HEK293 (cell line): ENCODE measurements at regions of chr9 and their contacts with region 1.

Region 1: DNA sequence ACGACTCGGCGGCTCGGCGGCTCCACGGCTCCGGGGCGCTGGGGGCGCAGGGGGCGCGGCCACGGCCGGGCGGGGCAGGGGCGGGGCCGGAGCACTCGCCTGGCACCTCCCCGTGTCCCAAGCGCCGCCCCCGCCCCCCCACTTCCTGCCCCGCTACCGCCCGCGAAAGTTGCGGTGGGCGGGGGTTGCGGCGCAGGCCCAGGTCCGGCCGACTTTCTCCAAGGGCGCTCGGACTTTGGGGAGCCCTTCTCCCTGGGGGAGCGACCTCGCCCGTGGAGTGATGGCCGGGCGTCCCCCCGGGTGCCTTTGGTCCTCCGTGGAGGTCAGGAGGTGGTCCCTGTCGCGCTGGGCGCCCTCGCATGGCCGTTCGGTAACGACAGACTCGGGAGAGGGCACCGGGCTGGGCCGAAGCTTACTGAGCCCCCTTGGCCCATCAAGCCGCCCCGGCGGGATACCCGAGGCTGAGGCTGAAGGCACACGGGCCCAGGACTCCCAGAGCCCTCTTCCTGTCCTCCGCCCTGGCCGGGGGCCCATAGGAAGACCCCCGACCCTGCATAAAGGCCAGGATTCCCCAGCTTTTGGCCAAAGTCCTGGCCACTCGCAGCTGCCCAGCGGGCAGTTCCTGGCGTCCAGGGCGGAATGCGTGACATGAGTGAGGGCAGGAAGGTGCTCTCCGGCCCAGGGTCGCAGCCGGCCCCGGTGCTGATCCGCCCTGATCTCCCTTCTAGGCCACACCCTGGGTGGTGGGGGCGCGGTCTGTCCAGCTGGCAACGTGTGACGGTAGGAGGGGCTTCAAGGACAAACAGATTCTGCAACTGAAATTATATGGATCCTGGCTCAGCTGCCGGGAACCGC is 883 bp upstream of the VAV2 start:
- H3K4me3 ChIP-seq: peak overlapping the region; percentile 74
- H3K27ac ChIP-seq: peak overlapping the region; percentile 71; the same call in 1 of the 2 replicates
- H3K4me1 ChIP-seq: peaks cover 8% of the 10 kb centered on the region; the same call in 1 of the 2 replicates
- CTCF ChIP-seq: peak; percentile 95

Region 2: GRCh38 chr9:133742849-133743444 is 250.1 kb before region 1 on chr9:
- CTCF ChIA-PET with region 1: interaction called, 27 read pairs
- POLR2A ChIA-PET with region 1: no interaction called
- H3K4me3 ChIP-seq: no peak overlapping the region
- H3K27ac ChIP-seq: no peak overlapping the region
- H3K4me1 ChIP-seq: no peaks in the 10 kb centered on the region; the same call in 1 of the 2 replicates
- CTCF ChIP-seq: peak; percentile 99

Region 3: GRCh38 chr9:133782157-133783130 is 210.6 kb before region 1 on chr9:
- CTCF ChIA-PET with region 1: interaction called, 200 read pairs
- POLR2A ChIA-PET with region 1: interaction called, 14 read pairs
- H3K4me3 ChIP-seq: no peak overlapping the region
- H3K27ac ChIP-seq: no peak overlapping the region
- H3K4me1 ChIP-seq: no peaks in the 10 kb centered on the region
- CTCF ChIP-seq: peak; percentile 77

Region 4: GRCh38 chr9:133803028-133803585 is 189.9 kb before region 1 on chr9:
- CTCF ChIA-PET with region 1: interaction called, 16 read pairs
- POLR2A ChIA-PET with region 1: interaction called, 4 read pairs
- H3K4me3 ChIP-seq: no peak overlapping the region
- H3K27ac ChIP-seq: no peak overlapping the region
- H3K4me1 ChIP-seq: no peaks in the 10 kb centered on the region
- CTCF ChIP-seq: no peak

Region 5: GRCh38 chr9:134004131-134004873 is 11.3 kb after region 1 on chr9:
- CTCF ChIA-PET with region 1: interaction called, 20 read pairs
- POLR2A ChIA-PET with region 1: no interaction called
- H3K4me3 ChIP-seq: no peak overlapping the region
- H3K27ac ChIP-seq: no peak overlapping the region
- H3K4me1 ChIP-seq: no peaks in the 10 kb centered on the region
- CTCF ChIP-seq: no peak

Region 6: GRCh38 chr9:134024828-134025605 is 32.0 kb after region 1 on chr9 and contains the start of gene BRD3OS:
- CTCF ChIA-PET with region 1: interaction called, 51 read pairs
- POLR2A ChIA-PET with region 1: interaction called, 3 read pairs
- H3K4me3 ChIP-seq: peak within 1 kb of the TSS; percentile 50
- H3K27ac ChIP-seq: peak within 1 kb of the TSS; percentile 41; the same call in 1 of the 2 replicates
- H3K4me1 ChIP-seq: 0 out of 2 replicates have a peak, but pooled peaks cover 2% of the 10 kb centered on the region
- CTCF ChIP-seq: no peak